Activated CD4-positive, alpha-beta memory T cell treated with anti-CD3 and anti-CD28 coated beads for 36 hours (primary cell): ENCODE measurements at regions of chr12 and their contacts with region 1.

Region 1: DNA sequence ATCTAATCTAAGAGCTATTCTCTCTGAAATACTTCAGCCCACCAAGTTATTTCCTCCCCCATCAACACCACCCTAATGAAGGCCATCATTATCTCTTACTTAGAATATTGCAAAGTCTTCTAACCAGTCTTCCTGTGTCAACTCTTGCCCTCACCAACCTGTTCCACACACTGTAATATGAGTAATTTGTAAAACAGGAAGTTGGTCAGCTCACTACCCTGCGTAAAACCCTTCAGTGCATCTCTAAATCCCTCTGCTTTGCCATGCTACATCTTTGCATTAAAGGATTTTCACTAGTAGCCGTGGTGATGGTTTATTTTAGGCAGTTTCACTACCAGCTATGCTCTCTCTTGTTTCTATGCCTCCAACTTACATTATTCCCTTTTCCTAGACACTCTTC is 70.0 kb downstream of the KIF21A start:
- DNase-seq: peak; percentile 16
- H3K4me3 Mint-ChIP-seq: no peak overlapping the region
- H3K27ac Mint-ChIP-seq: peak overlapping the region; percentile 52
- H3K4me1 Mint-ChIP-seq: peaks cover 16% of the 10 kb centered on the region
- H3K27me3 Mint-ChIP-seq: no peaks in the 10 kb centered on the region

Region 2: GRCh38 chr12:39329018-39329417 is 43.9 kb before region 1 on chr12:
- CTCF ChIA-PET with region 1: no interaction called
- POLR2A ChIA-PET with region 1: no interaction called
- intact Hi-C with region 1: no loop called
- DNase-seq: no peak
- H3K4me3 Mint-ChIP-seq: no peak overlapping the region
- H3K27ac Mint-ChIP-seq: no peak overlapping the region
- H3K4me1 Mint-ChIP-seq: peaks cover 18% of the 10 kb centered on the region
- H3K27me3 Mint-ChIP-seq: no peaks in the 10 kb centered on the region

Region 3: GRCh38 chr12:39341179-39341578 is 31.8 kb before region 1 on chr12:
- CTCF ChIA-PET with region 1: no interaction called
- POLR2A ChIA-PET with region 1: no interaction called
- intact Hi-C with region 1: loop called (anchors 2 kb)
- DNase-seq: no peak
- H3K4me3 Mint-ChIP-seq: no peak overlapping the region
- H3K27ac Mint-ChIP-seq: peak overlapping the region; percentile 23
- H3K4me1 Mint-ChIP-seq: peaks cover 16% of the 10 kb centered on the region
- H3K27me3 Mint-ChIP-seq: no peaks in the 10 kb centered on the region

Region 4: GRCh38 chr12:39402922-39403321 is 30.0 kb after region 1 on chr12:
- CTCF ChIA-PET with region 1: interaction called, 3 read pairs
- POLR2A ChIA-PET with region 1: no interaction called
- intact Hi-C with region 1: loop called (anchors 2 kb)
- DNase-seq: no peak
- H3K4me3 Mint-ChIP-seq: no peak overlapping the region
- H3K27ac Mint-ChIP-seq: no peak overlapping the region
- H3K4me1 Mint-ChIP-seq: peaks cover 25% of the 10 kb centered on the region
- H3K27me3 Mint-ChIP-seq: no peaks in the 10 kb centered on the region

Region 5: GRCh38 chr12:39467432-39467870 is 94.5 kb after region 1 on chr12:
- CTCF ChIA-PET with region 1: interaction called, 4 read pairs
- POLR2A ChIA-PET with region 1: no interaction called
- intact Hi-C with region 1: loop called (anchors 1 kb)
- DNase-seq: peak; percentile 13
- H3K4me3 Mint-ChIP-seq: no peak overlapping the region
- H3K27ac Mint-ChIP-seq: peak overlapping the region; percentile 39
- H3K4me1 Mint-ChIP-seq: peaks cover 16% of the 10 kb centered on the region
- H3K27me3 Mint-ChIP-seq: peaks cover 2% of the 10 kb centered on the region

Region 6: GRCh38 chr12:39503445-39503844 is 130.5 kb after region 1 on chr12:
- CTCF ChIA-PET with region 1: no interaction called
- POLR2A ChIA-PET with region 1: no interaction called
- intact Hi-C with region 1: no loop called
- DNase-seq: no peak
- H3K4me3 Mint-ChIP-seq: no peak overlapping the region
- H3K27ac Mint-ChIP-seq: no peak overlapping the region
- H3K4me1 Mint-ChIP-seq: no peaks in the 10 kb centered on the region
- H3K27me3 Mint-ChIP-seq: no peaks in the 10 kb centered on the region